ENCODE measurements at regions of chr7 and their contacts with region 1.

Region 1: DNA sequence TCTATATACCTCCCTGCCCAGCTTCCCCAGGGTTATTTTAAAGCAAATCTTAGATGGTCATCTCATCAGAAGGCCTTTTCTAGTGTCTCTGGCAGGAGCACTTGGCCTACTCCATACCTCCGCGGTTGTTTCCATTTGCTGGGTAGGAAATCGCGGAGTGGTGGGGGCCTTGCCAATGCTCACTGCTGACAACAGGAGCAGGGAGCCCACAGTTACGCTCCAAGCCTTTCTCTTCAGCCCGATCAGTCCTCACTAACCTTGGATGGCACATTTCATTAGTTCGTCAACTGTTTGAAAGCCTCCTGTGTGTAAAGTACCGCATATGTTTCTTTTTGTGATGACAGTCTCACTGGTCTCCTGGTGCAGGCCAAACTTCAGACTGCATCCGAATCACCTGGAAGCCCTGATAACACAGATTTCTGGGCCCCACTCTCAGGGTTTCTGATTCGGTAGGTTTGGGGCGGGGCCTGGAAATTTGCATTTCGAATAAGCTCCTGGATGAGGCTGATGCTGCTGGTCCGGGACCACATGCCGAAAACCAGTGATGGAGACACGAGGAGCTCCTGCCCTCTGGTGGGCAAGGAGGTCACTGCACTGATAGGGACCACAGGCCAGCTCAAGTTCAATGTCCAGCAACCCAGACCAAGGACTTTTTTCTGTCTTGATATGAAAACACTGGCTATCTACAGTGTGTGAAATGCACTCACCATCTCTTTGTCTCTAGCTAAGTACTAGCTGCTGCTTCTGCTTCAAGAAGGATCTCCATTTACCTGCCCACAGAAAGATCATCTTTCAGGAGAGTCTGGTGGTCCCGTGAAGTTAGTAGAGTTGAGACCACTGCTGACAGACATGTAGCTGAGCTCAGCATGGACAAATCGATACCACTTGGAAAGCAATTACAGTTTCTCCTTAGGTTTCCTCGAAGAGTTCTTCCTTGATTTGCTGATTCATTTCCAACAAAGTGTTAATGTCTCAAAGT is 14.0 kb downstream of the LRGUK start:
- DNase-seq: peak; percentile 6 to 57 (median 42)
- ATAC-seq: peak; percentile 69
- H3K4me3 ChIP-seq: no peak overlapping the region
- H3K4me3 Mint-ChIP-seq: no peak overlapping the region
- H3K27ac ChIP-seq: no peak overlapping the region
- H3K27ac Mint-ChIP-seq: no peak overlapping the region
- H3K4me1 ChIP-seq: no peaks in the 10 kb centered on the region
- H3K4me1 Mint-ChIP-seq: peaks cover 6% of the 10 kb centered on the region
- H3K27me3 ChIP-seq: no peaks in the 10 kb centered on the region
- H3K27me3 Mint-ChIP-seq: no peaks in the 10 kb centered on the region
- CTCF ChIP-seq: peak; percentile 68

Region 2: GRCh38 chr7:132318352-132319318 is 1822.5 kb before region 1 on chr7:
- CTCF ChIA-PET with region 1: no interaction called
- POLR2A ChIA-PET with region 1: no interaction called
- intact Hi-C with region 1: loop called (anchors 2 to 10 kb)
- DNase-seq: peak; percentile 49 to 85 (median 76)
- ATAC-seq: peak; percentile 88
- H3K4me3 ChIP-seq: no peak overlapping the region
- H3K4me3 Mint-ChIP-seq: peak overlapping the region; percentile 42
- H3K27ac ChIP-seq: no peak overlapping the region
- H3K27ac Mint-ChIP-seq: no peak overlapping the region
- H3K4me1 ChIP-seq: peaks cover 9% of the 10 kb centered on the region
- H3K4me1 Mint-ChIP-seq: peaks cover 8% of the 10 kb centered on the region
- H3K27me3 ChIP-seq: peaks cover 9 to 12% of the 10 kb centered on the region in 2 experiments
- H3K27me3 Mint-ChIP-seq: peaks cover 31% of the 10 kb centered on the region
- CTCF ChIP-seq: peak; percentile 87

Region 3: GRCh38 chr7:134031835-134032617 is 109.2 kb before region 1 on chr7:
- CTCF ChIA-PET with region 1: no interaction called
- POLR2A ChIA-PET with region 1: no interaction called
- intact Hi-C with region 1: no loop called
- DNase-seq: peak in 3 of 9 experiments; percentile 49 to 73 (median 61)
- ATAC-seq: peak; percentile 70
- H3K4me3 ChIP-seq: no peak overlapping the region
- H3K4me3 Mint-ChIP-seq: no peak overlapping the region
- H3K27ac ChIP-seq: no peak overlapping the region
- H3K27ac Mint-ChIP-seq: peak overlapping the region; percentile 5
- H3K4me1 ChIP-seq: peaks cover 8% of the 10 kb centered on the region
- H3K4me1 Mint-ChIP-seq: peaks cover 23% of the 10 kb centered on the region
- H3K27me3 ChIP-seq: no peaks in the 10 kb centered on the region
- H3K27me3 Mint-ChIP-seq: no peaks in the 10 kb centered on the region
- CTCF ChIP-seq: no peak

Region 4: DNA sequence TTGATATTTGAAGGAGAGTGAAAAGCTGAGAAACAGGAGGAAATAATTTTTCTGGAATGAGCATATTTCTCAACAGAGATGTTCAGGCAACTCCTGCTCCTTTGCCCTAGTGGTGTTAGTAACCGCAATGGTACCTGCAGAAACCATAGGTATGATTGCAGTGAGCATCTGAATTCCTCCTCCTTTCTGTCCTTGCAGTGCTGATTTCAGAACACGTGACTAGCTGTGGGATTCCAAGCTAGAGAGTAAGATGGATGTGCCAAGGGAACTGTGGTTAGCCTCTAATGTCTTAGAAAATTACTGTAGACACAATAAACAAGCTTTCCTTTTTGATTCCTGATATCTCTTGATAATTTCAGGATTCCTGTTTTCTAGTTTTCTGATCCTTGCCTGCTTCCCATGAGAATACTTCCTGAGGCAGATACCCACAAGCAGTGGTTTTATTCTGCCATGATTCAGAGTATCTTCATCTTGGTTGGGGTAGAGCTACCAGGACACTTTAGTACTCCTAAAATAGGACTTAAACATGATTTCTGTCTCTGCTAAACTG is 13.5 kb after region 1 on chr7:
- CTCF ChIA-PET with region 1: interaction called, 12 read pairs
- POLR2A ChIA-PET with region 1: no interaction called
- intact Hi-C with region 1: no loop called
- DNase-seq: no peak
- ATAC-seq: no peak
- H3K4me3 ChIP-seq: no peak overlapping the region
- H3K4me3 Mint-ChIP-seq: no peak overlapping the region
- H3K27ac ChIP-seq: no peak overlapping the region
- H3K27ac Mint-ChIP-seq: no peak overlapping the region
- H3K4me1 ChIP-seq: no peaks in the 10 kb centered on the region
- H3K4me1 Mint-ChIP-seq: no peaks in the 10 kb centered on the region
- H3K27me3 ChIP-seq: peaks cover 0 to 3% of the 10 kb centered on the region in 2 experiments
- H3K27me3 Mint-ChIP-seq: peaks cover 3% of the 10 kb centered on the region
- CTCF ChIP-seq: no peak

Region 5: GRCh38 chr7:134327896-134328295 is 186.7 kb after region 1 on chr7:
- CTCF ChIA-PET with region 1: interaction called, 6 read pairs
- POLR2A ChIA-PET with region 1: no interaction called
- intact Hi-C with region 1: loop called (anchors 2 to 5 kb)
- DNase-seq: peak; percentile 36 to 81 (median 63)
- ATAC-seq: peak; percentile 97
- H3K4me3 ChIP-seq: no peak overlapping the region
- H3K4me3 Mint-ChIP-seq: no peak overlapping the region
- H3K27ac ChIP-seq: no peak overlapping the region
- H3K27ac Mint-ChIP-seq: no peak overlapping the region
- H3K4me1 ChIP-seq: no peaks in the 10 kb centered on the region
- H3K4me1 Mint-ChIP-seq: peaks cover 4% of the 10 kb centered on the region
- H3K27me3 ChIP-seq: peaks cover 0 to 2% of the 10 kb centered on the region in 2 experiments
- H3K27me3 Mint-ChIP-seq: peaks cover 20% of the 10 kb centered on the region
- CTCF ChIP-seq: peak; percentile 53

Measured in CD8-positive, alpha-beta T cell (primary cell).